ENCODE measurements at regions of chr9 and their contacts with region 1.

Region 1: GRCh38 chr9:109652964-109653363 is 127.0 kb upstream of the PALM2AKAP2 start:
- DNase-seq: peak; percentile 63
- H3K4me3 Mint-ChIP-seq: no peak overlapping the region
- H3K27ac Mint-ChIP-seq: no peak overlapping the region
- H3K4me1 Mint-ChIP-seq: peaks cover 6% of the 10 kb centered on the region
- H3K27me3 Mint-ChIP-seq: no peaks in the 10 kb centered on the region
- CTCF ChIP-seq: peak; percentile 36

Region 2: GRCh38 chr9:109779711-109780452 is 126.9 kb after region 1 on chr9 and contains the start of gene PALM2AKAP2:
- CTCF ChIA-PET with region 1: no interaction called
- POLR2A ChIA-PET with region 1: no interaction called
- intact Hi-C with region 1: loop called (anchors 5 kb)
- DNase-seq: peak; percentile 60
- H3K4me3 Mint-ChIP-seq: peak within 1 kb of the TSS; percentile 80
- H3K27ac Mint-ChIP-seq: no peak within 1 kb of the TSS
- H3K4me1 Mint-ChIP-seq: peaks cover 6% of the 10 kb centered on the region
- H3K27me3 Mint-ChIP-seq: no peaks in the 10 kb centered on the region
- CTCF ChIP-seq: peak; percentile 3
- total RNA-seq, gene PALM2AKAP2: 5.3 and 9.1 TPM in 2 replicates

Region 3: GRCh38 chr9:109817846-109818472 is 165.0 kb after region 1 on chr9:
- CTCF ChIA-PET with region 1: interaction called, 3 read pairs
- POLR2A ChIA-PET with region 1: interaction called, 3 read pairs
- intact Hi-C with region 1: loop called (anchors 1 kb)
- DNase-seq: peak; percentile 91
- H3K4me3 Mint-ChIP-seq: no peak overlapping the region
- H3K27ac Mint-ChIP-seq: no peak overlapping the region
- H3K4me1 Mint-ChIP-seq: no peaks in the 10 kb centered on the region
- H3K27me3 Mint-ChIP-seq: no peaks in the 10 kb centered on the region
- CTCF ChIP-seq: peak; percentile 84

Measured in MCF 10A (cell line).